ENCODE measurements at regions of chr3 and their contacts with region 1.

Region 1: GRCh38 chr3:138443521-138444503 is 9.4 kb downstream of the ESYT3 start:
- DNase-seq: no peak
- ATAC-seq: no peak
- H3K4me3 ChIP-seq: no peak overlapping the region
- H3K27ac ChIP-seq: no peak overlapping the region
- H3K4me1 ChIP-seq: no peaks in the 10 kb centered on the region
- H3K27me3 ChIP-seq: no peaks in the 10 kb centered on the region
- CTCF ChIP-seq: no peak

Region 2: DNA sequence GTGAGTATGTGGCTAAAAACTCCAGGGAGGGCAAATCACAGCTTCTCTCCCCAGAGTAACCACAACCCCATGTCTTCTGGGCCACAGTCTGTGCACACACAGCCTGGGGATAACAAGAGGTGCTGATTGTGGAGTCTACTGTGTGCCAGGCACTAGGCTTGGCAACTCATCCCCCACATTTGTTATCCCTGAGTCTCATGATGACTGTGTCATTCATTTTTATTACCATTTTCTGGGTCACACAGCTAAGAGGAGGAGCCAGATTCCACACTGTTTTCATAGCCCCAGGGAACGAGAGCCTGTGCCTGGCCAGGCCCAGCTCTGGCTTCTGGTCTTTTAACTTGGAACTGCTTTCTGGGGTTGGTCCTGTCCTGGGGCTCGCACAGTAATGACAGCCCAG is 25.1 kb after region 1 on chr3:
- intact Hi-C with region 1: no loop called
- DNase-seq: peak in 1 of 2 donors; percentile 71
- ATAC-seq: peak; percentile 87 to 95 (median 94)
- H3K4me3 ChIP-seq: peak overlapping the region; percentile 54
- H3K27ac ChIP-seq: peak overlapping the region; percentile 94
- H3K4me1 ChIP-seq: peaks cover 29% of the 10 kb centered on the region
- H3K27me3 ChIP-seq: no peaks in the 10 kb centered on the region
- CTCF ChIP-seq: no peak

Region 3: GRCh38 chr3:138493804-138494606 is 50.2 kb after region 1 on chr3:
- intact Hi-C with region 1: loop called in 1 of 2 experiments (anchors 2 kb)
- DNase-seq: no peak
- ATAC-seq: peak; percentile 90 to 94 (median 91)
- H3K4me3 ChIP-seq: no peak overlapping the region
- H3K27ac ChIP-seq: peak overlapping the region; percentile 79
- H3K4me1 ChIP-seq: peaks cover 31% of the 10 kb centered on the region
- H3K27me3 ChIP-seq: no peaks in the 10 kb centered on the region
- CTCF ChIP-seq: no peak